PC-9 (cell line): ENCODE measurements at regions of chr11 and their contacts with region 1.

Region 1: GRCh38 chr11:100681064-100681502 is 6.0 kb upstream of the ARHGAP42 start:
- DNase-seq: peak; percentile 64 to 87
- H3K4me3 ChIP-seq: no peak overlapping the region
- H3K27ac ChIP-seq: 0 out of 2 replicates have a peak overlapping the region, but pooled peaks have one; percentile 20
- H3K4me1 ChIP-seq: peaks cover 34% of the 10 kb centered on the region
- H3K27me3 ChIP-seq: no peaks in the 10 kb centered on the region
- CTCF ChIP-seq: no peak

Region 2: DNA sequence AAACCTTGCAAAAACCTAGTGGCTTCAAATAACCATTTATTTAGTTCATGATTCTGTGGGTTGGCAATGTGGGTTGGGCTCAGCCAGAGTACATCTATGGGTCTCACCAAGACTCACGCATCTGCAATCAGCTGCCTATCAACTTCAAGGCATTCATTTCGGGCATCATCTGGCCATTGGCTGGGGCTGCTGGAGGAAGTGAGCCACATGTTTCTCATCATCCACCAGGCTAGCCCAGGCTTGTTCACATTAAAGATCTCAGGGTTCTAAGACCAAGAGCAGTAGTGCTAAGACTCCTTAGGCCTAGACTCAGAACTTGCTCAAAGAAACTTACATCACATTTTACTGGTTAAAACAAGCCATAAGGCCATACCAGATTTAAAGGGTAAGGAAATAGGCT is 472.9 kb before region 1 on chr11:
- CTCF ChIA-PET with region 1: no interaction called
- POLR2A ChIA-PET with region 1: interaction called, 11 read pairs
- intact Hi-C with region 1: no loop called
- DNase-seq: no peak
- H3K4me3 ChIP-seq: no peak overlapping the region
- H3K27ac ChIP-seq: no peak overlapping the region
- H3K4me1 ChIP-seq: no peaks in the 10 kb centered on the region
- H3K27me3 ChIP-seq: no peaks in the 10 kb centered on the region
- CTCF ChIP-seq: no peak

Region 3: GRCh38 chr11:100602716-100603115 is 78.4 kb before region 1 on chr11:
- CTCF ChIA-PET with region 1: no interaction called
- POLR2A ChIA-PET with region 1: no interaction called
- intact Hi-C with region 1: no loop called
- DNase-seq: no peak
- H3K4me3 ChIP-seq: no peak overlapping the region
- H3K27ac ChIP-seq: no peak overlapping the region
- H3K4me1 ChIP-seq: no peaks in the 10 kb centered on the region
- H3K27me3 ChIP-seq: no peaks in the 10 kb centered on the region
- CTCF ChIP-seq: no peak

Region 4: DNA sequence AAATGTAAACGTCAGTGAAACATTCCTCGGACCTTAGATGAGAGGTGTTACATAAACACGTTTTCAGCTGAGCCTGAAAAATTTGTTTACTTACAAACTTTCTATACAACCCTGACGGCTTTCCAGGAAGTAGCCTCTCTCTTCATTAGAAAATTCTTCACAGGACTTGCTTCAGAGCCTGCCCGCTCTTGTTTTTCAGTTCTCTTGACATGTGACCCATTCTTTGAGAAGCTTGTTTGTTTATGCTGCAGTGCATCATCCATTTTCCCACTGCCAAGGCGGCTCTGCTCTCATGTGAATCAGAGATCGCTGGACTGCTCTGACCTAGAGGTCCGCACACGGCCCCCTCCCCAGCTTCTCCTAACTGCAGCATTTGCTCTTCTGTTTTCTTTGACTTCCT is 41.9 kb before region 1 on chr11:
- CTCF ChIA-PET with region 1: no interaction called
- POLR2A ChIA-PET with region 1: no interaction called
- intact Hi-C with region 1: no loop called
- DNase-seq: no peak
- H3K4me3 ChIP-seq: no peak overlapping the region
- H3K27ac ChIP-seq: no peak overlapping the region
- H3K4me1 ChIP-seq: no peaks in the 10 kb centered on the region
- H3K27me3 ChIP-seq: no peaks in the 10 kb centered on the region
- CTCF ChIP-seq: no peak

Region 5: GRCh38 chr11:100827934-100828661 is 147.0 kb after region 1 on chr11:
- CTCF ChIA-PET with region 1: interaction called, 6 read pairs
- POLR2A ChIA-PET with region 1: interaction called, 6 read pairs
- intact Hi-C with region 1: loop called (anchors 2 kb)
- DNase-seq: peak; percentile 46 to 95
- H3K4me3 ChIP-seq: no peak overlapping the region
- H3K27ac ChIP-seq: peak overlapping the region; percentile 75
- H3K4me1 ChIP-seq: peaks cover 50% of the 10 kb centered on the region
- H3K27me3 ChIP-seq: no peaks in the 10 kb centered on the region
- CTCF ChIP-seq: peak; percentile 67

Region 6: GRCh38 chr11:100855466-100856067 is 174.5 kb after region 1 on chr11:
- CTCF ChIA-PET with region 1: interaction called, 3 read pairs
- POLR2A ChIA-PET with region 1: no interaction called
- intact Hi-C with region 1: loop called (anchors 1 kb)
- DNase-seq: peak in 1 of 2 experiments; percentile 59
- H3K4me3 ChIP-seq: no peak overlapping the region
- H3K27ac ChIP-seq: no peak overlapping the region
- H3K4me1 ChIP-seq: peaks cover 3% of the 10 kb centered on the region
- H3K27me3 ChIP-seq: no peaks in the 10 kb centered on the region
- CTCF ChIP-seq: peak; percentile 89

Region 7: GRCh38 chr11:100930185-100930778 is 249.2 kb after region 1 on chr11:
- CTCF ChIA-PET with region 1: interaction called, 3 read pairs
- POLR2A ChIA-PET with region 1: interaction called, 5 read pairs
- intact Hi-C with region 1: loop called (anchors 2 kb)
- DNase-seq: peak in 1 of 2 experiments; percentile 71
- H3K4me3 ChIP-seq: no peak overlapping the region
- H3K27ac ChIP-seq: no peak overlapping the region
- H3K4me1 ChIP-seq: peaks cover 35% of the 10 kb centered on the region
- H3K27me3 ChIP-seq: no peaks in the 10 kb centered on the region
- CTCF ChIP-seq: peak; percentile 90

Region 8: DNA sequence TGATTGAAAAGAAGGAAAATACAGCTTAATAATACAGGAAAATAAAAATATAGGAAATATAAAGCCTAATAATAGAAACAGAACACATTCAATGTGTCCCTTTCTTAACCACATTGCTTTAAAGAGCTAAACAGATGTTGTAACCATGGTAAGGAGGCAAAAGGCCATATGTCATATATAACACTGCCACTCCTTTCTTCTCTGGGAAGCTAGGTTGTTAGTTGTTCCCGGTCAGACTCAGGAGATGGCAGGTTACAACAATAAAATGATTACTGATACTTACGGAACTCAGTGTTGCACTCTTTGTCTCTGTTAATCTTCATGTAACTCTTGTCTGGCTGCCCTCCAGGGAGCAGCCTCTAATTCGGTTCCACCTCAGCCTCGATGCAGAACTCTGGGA is 583.2 kb after region 1 on chr11:
- CTCF ChIA-PET with region 1: no interaction called
- POLR2A ChIA-PET with region 1: no interaction called
- intact Hi-C with region 1: no loop called
- DNase-seq: no peak
- H3K4me3 ChIP-seq: no peak overlapping the region
- H3K27ac ChIP-seq: no peak overlapping the region
- H3K4me1 ChIP-seq: no peaks in the 10 kb centered on the region
- H3K27me3 ChIP-seq: no peaks in the 10 kb centered on the region
- CTCF ChIP-seq: no peak